ENCODE measurements at regions of chr7 and their contacts with region 1.

Region 1: GRCh38 chr7:131688738-131689661 is 132.6 kb upstream of the PODXL start:
- DNase-seq: peak; percentile 0
- H3K4me3 ChIP-seq: no peak overlapping the region
- H3K27me3 ChIP-seq: peaks cover 12% of the 10 kb centered on the region; the same call in 1 of the 2 replicates
- CTCF ChIP-seq: peak; percentile 97

Region 2: GRCh38 chr7:131699323-131699722 is 10.3 kb after region 1 on chr7:
- CTCF ChIA-PET with region 1: interaction called, 18 read pairs
- POLR2A ChIA-PET with region 1: no interaction called
- DNase-seq: no peak
- H3K4me3 ChIP-seq: no peak overlapping the region
- H3K27me3 ChIP-seq: no peaks in the 10 kb centered on the region
- CTCF ChIP-seq: no peak

Region 3: DNA sequence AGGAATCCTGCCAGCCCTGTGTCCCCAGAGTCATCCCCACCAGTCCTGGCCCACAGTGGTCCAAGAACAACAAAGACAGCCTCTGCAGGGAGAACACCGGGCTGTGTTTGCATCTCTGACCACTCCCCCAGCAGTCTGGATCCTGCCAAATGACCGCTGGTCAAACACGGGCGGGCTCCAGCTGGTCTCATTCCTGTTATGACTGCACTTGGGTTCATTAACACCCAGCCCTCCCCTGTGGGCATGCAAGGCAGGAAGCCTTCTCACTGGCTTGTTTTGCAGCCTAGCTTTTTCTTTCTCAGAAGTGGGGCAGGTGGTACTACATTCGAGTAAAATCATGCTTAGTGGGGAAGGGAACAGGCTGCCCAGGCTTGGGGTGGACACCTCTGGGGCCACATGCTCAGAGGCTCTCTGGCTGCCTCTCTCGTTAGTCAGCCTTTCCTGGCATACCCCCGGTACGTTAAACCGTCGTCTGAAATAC is 697.2 kb after region 1 on chr7:
- CTCF ChIA-PET with region 1: no interaction called
- POLR2A ChIA-PET with region 1: no interaction called
- DNase-seq: no peak
- H3K4me3 ChIP-seq: no peak overlapping the region
- H3K27me3 ChIP-seq: no peaks in the 10 kb centered on the region
- CTCF ChIP-seq: no peak

Measured in BJ (cell line).